ENCODE measurements at regions of chr1 and their contacts with region 1.

Region 1: DNA sequence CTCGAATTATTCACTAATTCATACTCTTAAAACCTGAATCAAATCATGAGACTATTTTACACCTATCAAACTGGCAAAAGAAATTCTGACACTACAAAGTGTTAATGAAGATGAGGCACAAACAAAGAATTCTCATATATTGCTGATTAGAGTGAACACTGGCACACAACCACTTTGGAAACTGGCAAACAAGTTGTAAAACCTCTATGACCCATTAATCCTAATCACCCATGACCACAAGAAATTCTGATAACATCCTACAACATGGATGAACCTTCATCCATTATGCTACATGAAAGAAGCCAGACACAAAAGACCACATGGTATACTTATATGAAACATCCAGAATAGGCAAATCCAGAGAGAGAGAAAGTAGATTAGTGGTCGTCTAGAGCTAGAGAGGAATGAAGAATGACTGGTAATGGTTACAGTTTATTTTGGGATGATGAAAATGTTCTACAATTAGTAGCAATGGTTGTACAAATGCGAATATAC is 8.5 kb downstream of the GPBP1L1 start:
- DNase-seq: no peak

Region 2: DNA sequence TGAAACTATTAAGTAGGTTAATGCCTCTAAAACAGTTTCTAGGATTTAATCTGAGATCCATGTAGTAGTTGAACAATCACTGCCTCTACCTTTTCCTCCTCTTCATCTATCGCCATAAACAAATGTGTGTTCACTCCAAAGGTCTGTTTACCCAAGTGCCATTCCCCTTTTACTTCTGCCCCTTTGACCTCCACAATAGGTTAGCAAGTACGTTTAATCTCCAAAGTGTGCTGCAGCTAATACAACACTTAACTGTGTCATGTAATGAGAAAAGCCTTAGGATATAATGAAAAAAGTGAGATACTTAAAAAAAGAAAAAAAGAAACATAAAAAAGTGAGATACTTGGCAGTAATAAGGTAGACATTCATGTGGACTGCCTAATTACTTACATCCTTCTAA is 19.6 kb before region 1 on chr1:
- intact Hi-C with region 1: loop called in 1 of 2 experiments (anchors 1 kb)
- DNase-seq: no peak

Measured in posterior vena cava (tissue), 2 donors.